ENCODE measurements at regions of chr11 and their contacts with region 1.

Region 1: GRCh38 chr11:94767761-94768601 is at the start of gene AMOTL1:
- DNase-seq: peak; percentile 94
- H3K4me3 ChIP-seq: peak within 1 kb of the TSS; percentile 89 to 97
- H3K27ac ChIP-seq: peak within 1 kb of the TSS; percentile 75 to 95
- H3K4me1 ChIP-seq: peaks cover 14 to 21% of the 10 kb centered on the region in 2 experiments; a peak in 3 of 4 replicates
- H3K27me3 ChIP-seq: no peaks in the 10 kb centered on the region
- CTCF ChIP-seq: no peak; the same call in 1 of the 2 replicates
- EP300 ChIP-seq: peak in 1 of 2 experiments; percentile 60; a peak in 2 of 4 replicates
- RAD21 ChIP-seq: peak; percentile 53
- polyA plus RNA-seq, gene AMOTL1: 10.7 and 11.7 TPM in 2 replicates

Region 2: DNA sequence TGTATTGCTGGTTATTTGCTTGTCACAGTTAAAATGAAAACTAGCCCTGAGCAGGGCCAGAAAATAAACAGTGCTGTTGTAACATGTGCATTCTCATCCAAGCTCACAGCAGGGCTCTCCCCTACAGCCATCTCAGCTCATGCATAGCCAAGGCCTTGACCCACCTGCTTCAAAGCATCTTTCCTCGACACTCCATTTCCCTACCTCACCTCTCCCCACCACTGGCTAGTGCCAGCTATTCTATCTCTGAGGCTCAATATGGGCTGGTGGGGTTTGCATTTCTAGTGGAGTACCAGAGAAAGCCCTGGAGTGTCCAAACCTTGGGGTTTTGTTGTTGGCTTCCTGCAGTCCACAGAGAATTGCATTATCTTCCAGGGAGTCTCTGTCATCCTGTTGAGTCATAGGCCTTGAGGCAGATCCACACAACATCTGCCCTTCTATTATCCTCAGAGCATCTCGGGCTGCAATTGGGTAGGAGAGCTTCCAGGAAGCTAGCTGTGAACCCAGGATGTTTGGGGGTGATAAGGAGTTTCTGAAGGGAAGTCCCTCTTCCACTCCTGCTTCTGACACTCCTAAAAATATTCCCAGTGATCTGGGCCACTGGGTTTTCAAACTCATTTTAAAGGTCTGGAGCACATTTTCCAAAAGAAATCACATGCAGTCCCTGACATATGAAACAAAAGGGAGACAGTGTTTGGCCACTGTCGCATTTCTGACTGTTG is 35.9 kb before region 1 on chr11:
- CTCF ChIA-PET with region 1: interaction called, 10 read pairs
- POLR2A ChIA-PET with region 1: interaction called, 3 read pairs
- DNase-seq: peak; percentile 49
- H3K4me3 ChIP-seq: no peak overlapping the region
- H3K27ac ChIP-seq: peak overlapping the region; percentile 44 to 85
- H3K4me1 ChIP-seq: peaks cover 20 to 36% of the 10 kb centered on the region in 2 experiments; a peak in 3 of 4 replicates
- H3K27me3 ChIP-seq: no peaks in the 10 kb centered on the region
- CTCF ChIP-seq: no peak
- EP300 ChIP-seq: peak in 1 of 2 experiments; percentile 71; a peak in 1 of 4 replicates
- RAD21 ChIP-seq: no peak